Activated CD4-positive, alpha-beta memory T cell treated with anti-CD3 and anti-CD28 coated beads, Interleukin-2, amount 10 ng/mL, durations not matched to agents 7 days and 5 days (primary cell): ENCODE measurements at regions of chr2 and their contacts with region 1.

Region 1: DNA sequence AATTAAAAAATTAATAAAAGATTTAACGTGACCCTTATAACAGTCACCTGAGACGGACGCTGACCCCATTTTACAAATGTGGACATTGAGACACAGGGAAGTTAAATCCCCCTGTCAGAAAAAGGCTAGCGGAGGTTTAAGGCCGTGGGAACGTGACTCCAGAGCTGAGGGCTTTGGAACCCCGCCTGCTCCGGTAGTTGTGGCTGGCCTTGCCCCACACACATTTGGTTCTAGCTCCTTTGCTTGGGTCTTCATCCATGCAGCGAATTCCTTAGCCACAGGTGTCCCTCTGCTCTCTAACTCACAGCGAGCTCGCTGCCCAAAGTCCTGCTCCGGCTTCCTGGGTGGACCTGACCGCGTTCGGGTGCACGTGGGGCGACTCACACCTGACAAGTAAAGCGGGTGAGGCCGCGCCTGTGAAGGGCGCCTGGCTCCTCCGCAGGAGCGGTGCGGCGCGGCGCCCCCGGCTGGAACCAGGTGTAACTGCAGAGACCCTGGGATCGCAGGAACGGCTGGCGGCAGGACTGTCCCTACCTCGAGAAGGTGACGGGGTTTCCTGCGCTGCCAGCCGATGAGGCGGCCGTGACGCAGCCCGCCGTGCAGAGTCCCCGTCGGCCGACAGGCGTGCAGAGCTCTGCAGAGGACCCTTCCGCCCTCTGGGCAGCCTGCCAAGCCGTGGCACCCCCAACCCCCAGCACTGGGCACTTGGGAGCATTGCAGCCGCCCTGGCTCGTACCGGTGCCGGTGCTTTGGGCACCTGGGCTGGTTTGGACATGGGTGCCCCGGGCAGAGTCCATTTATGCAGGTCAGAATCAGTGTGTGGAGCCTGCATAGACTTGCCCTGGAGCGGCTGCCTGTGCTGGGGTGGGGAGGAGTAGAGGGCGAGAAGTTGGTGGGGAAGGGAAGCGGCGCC is 2.4 kb upstream of the PROC start:
- DNase-seq: peak; percentile 79
- H3K4me3 Mint-ChIP-seq: peak overlapping the region; percentile 59
- H3K27ac Mint-ChIP-seq: no peak overlapping the region
- H3K4me1 Mint-ChIP-seq: peaks cover 34% of the 10 kb centered on the region
- H3K27me3 Mint-ChIP-seq: peaks cover 35% of the 10 kb centered on the region

Region 2: GRCh38 chr2:126831234-126832005 is 584.4 kb before region 1 on chr2:
- CTCF ChIA-PET with region 1: no interaction called
- POLR2A ChIA-PET with region 1: no interaction called
- DNase-seq: no peak
- H3K4me3 Mint-ChIP-seq: no peak overlapping the region
- H3K27ac Mint-ChIP-seq: no peak overlapping the region
- H3K4me1 Mint-ChIP-seq: no peaks in the 10 kb centered on the region
- H3K27me3 Mint-ChIP-seq: peaks cover 2% of the 10 kb centered on the region

Region 3: DNA sequence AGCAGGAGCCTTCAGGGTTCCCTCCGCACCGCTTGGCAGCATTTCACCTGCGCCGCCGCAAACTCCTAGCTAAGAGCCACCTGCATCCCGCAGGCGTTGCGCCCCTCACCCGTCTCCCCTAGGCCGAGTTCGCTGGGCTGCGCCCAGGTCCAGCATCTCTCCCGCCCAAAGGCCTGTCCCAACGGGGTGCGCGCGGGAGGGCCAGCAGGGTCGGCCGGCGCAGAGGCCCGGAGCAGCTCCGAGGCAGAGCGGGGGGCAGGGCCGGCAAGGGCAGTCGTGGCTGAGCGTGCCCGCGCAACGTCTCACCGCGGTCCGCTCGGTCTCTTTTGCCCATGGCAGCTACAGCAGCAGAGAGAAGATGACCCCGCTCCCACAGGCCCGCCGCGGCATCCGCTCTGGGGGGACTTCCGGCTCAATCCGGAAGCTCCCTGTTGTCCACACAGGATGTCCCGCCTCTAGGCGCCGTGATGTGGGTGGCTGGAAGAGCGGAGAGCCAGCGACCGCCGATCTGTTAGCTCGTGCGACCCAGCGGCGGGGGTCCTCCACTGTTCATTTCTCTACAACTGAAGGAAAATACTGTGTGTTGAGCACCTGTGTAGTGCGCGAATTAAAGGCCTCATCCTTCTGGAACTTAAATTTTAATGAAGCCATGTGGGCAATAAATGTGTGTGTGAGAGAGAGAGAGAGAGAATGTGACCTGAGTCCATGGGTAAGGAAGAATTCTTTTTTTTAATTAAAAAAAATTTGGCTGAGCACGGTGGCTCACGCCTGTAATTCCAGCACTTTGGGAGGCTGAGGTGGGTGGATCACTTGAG is 121.9 kb before region 1 on chr2 and contains the start of gene ERCC3:
- CTCF ChIA-PET with region 1: no interaction called
- POLR2A ChIA-PET with region 1: interaction called, 10 read pairs
- DNase-seq: peak; percentile 85
- H3K4me3 Mint-ChIP-seq: peak within 1 kb of the TSS; percentile 99
- H3K27ac Mint-ChIP-seq: peak within 1 kb of the TSS; percentile 89
- H3K4me1 Mint-ChIP-seq: peaks cover 26% of the 10 kb centered on the region
- H3K27me3 Mint-ChIP-seq: no peaks in the 10 kb centered on the region
- total RNA-seq, gene ERCC3: 50.0 to 51.9 TPM